IMR-90 (cell line): ENCODE measurements at regions of chr9 and their contacts with region 1.

Region 1: GRCh38 chr9:70413798-70414775 is at the start of gene KLF9:
- DNase-seq: peak; percentile 97
- ATAC-seq: peak; percentile 83
- H3K4me3 ChIP-seq: peak within 1 kb of the TSS; percentile 85
- H3K27ac ChIP-seq: peak within 1 kb of the TSS; percentile 92
- H3K4me1 ChIP-seq: peaks cover 7% of the 10 kb centered on the region
- H3K27me3 ChIP-seq: no peaks in the 10 kb centered on the region
- CTCF ChIP-seq: 0 out of 2 replicates have a peak, but pooled peaks have one; percentile 7
- POLR2A ChIP-seq: peak; percentile 97
- RAD21 ChIP-seq: peak; percentile 7
- total RNA-seq, gene KLF9: 7.5 and 11.4 TPM in 2 replicates

Region 2: GRCh38 chr9:70258692-70259511 is 155.2 kb before region 1 on chr9 and contains the start of gene SMC5:
- CTCF ChIA-PET with region 1: no interaction called
- POLR2A ChIA-PET with region 1: interaction called, 3 read pairs
- dilution Hi-C with region 1: no loop called
- in situ Hi-C with region 1: no loop called
- intact Hi-C with region 1: loop called (anchors 2 kb)
- DNase-seq: peak; percentile 92
- ATAC-seq: peak; percentile 84
- H3K4me3 ChIP-seq: peak within 1 kb of the TSS; percentile 75
- H3K27ac ChIP-seq: peak within 1 kb of the TSS; percentile 97
- H3K4me1 ChIP-seq: peaks cover 26% of the 10 kb centered on the region
- H3K27me3 ChIP-seq: no peaks in the 10 kb centered on the region
- CTCF ChIP-seq: no peak
- POLR2A ChIP-seq: peak; percentile 96
- RAD21 ChIP-seq: no peak
- total RNA-seq, gene SMC5: 12.0 and 25.8 TPM in 2 replicates

Region 3: DNA sequence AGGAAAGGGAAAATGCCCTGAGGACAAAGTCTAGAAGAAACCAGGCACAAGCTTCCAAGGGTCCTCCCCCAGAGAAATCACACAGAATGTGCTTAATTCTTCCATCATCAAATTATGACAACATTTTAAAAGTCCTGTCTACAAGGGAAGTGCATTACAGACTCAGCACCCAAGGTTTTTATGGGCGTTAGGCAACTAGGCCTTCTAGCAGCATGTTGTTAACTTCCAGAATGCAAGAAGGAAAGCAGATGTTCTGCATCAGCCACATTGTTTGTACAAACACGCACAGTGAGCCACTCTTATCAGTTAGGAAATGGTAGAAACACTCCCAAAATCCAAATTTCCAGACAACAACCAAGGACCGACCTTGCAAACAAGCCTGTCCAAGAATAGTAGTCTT is 128.8 kb before region 1 on chr9:
- CTCF ChIA-PET with region 1: no interaction called
- POLR2A ChIA-PET with region 1: interaction called, 11 read pairs
- dilution Hi-C with region 1: no loop called
- in situ Hi-C with region 1: no loop called
- intact Hi-C with region 1: no loop called
- DNase-seq: peak; percentile 73
- ATAC-seq: peak; percentile 74
- H3K4me3 ChIP-seq: no peak overlapping the region
- H3K27ac ChIP-seq: peak overlapping the region; percentile 81; the same call in 1 of the 2 replicates
- H3K4me1 ChIP-seq: peaks cover 15% of the 10 kb centered on the region
- H3K27me3 ChIP-seq: no peaks in the 10 kb centered on the region
- CTCF ChIP-seq: no peak
- POLR2A ChIP-seq: no peak
- RAD21 ChIP-seq: no peak

Region 4: DNA sequence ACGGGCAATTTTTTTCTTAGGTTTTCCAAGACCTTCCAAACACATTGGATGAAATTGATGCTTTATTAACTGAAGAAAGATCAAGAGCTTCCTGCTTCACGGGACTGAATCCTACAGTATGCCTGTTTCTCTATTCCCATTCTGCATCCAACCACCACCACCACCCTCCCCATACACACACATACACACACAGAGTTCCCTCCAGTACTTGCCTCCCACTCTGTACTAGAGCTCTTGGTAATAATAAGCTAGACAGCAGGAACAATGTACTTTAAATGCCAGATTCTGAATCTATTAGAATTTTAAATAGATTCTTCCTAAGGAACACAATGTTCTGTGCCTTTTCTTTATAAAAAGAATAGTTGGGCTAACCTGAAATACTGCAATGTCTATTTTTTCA is 67.0 kb before region 1 on chr9:
- CTCF ChIA-PET with region 1: no interaction called
- POLR2A ChIA-PET with region 1: no interaction called
- dilution Hi-C with region 1: no loop called
- in situ Hi-C with region 1: loop called (anchors 5 kb)
- intact Hi-C with region 1: loop called (anchors 5 kb)
- DNase-seq: no peak
- ATAC-seq: no peak
- H3K4me3 ChIP-seq: no peak overlapping the region
- H3K27ac ChIP-seq: no peak overlapping the region
- H3K4me1 ChIP-seq: no peaks in the 10 kb centered on the region
- H3K27me3 ChIP-seq: no peaks in the 10 kb centered on the region
- CTCF ChIP-seq: no peak
- POLR2A ChIP-seq: no peak
- RAD21 ChIP-seq: no peak

Region 5: DNA sequence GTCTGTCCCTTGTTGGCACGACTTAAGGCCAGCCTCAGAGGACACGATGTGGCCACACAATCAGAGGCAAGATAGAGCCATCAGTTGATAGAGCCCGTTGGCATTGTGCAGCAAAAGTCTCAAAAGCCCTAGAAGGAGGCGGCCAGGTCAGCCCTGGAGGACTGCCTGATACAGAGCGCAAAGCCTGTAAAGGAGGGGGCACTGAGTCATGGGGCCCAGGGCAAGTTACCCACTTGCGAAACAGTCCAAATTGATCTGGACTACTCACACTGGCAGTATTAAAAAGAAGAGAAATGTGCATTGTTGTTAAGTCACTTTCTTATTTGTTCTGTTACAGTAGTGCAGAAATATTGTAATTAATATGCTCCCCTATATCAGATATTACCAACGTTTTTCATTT is 51.1 kb before region 1 on chr9:
- CTCF ChIA-PET with region 1: no interaction called
- POLR2A ChIA-PET with region 1: interaction called, 19 read pairs
- dilution Hi-C with region 1: no loop called
- in situ Hi-C with region 1: no loop called
- intact Hi-C with region 1: no loop called
- DNase-seq: peak; percentile 32
- ATAC-seq: no peak; the same call in 1 of the 2 replicates
- H3K4me3 ChIP-seq: no peak overlapping the region
- H3K27ac ChIP-seq: no peak overlapping the region
- H3K4me1 ChIP-seq: no peaks in the 10 kb centered on the region
- H3K27me3 ChIP-seq: no peaks in the 10 kb centered on the region
- CTCF ChIP-seq: no peak
- POLR2A ChIP-seq: no peak
- RAD21 ChIP-seq: no peak

Region 6: DNA sequence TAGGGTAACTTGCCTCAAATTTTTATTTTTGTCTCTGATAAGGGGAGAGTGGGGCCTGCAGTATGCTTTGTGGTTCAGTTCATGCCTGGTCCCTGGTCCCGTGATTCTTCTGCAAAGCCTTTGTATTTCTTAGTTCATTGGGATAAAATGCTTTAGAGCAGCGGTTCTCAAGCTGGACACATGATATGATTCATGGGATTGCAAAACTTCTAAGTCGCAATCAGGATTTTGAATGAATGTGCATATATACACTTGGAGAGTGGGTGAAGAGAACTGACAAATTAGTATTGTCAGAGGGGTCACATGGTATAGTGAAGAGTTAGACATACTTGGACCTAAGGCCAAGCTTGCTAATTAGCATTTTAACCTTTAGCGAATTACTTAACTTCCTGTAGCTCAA is 265.8 kb after region 1 on chr9:
- CTCF ChIA-PET with region 1: no interaction called
- POLR2A ChIA-PET with region 1: no interaction called
- dilution Hi-C with region 1: no loop called
- in situ Hi-C with region 1: no loop called
- intact Hi-C with region 1: no loop called
- DNase-seq: peak; percentile 1
- ATAC-seq: no peak
- H3K4me3 ChIP-seq: no peak overlapping the region
- H3K27ac ChIP-seq: no peak overlapping the region
- H3K4me1 ChIP-seq: no peaks in the 10 kb centered on the region
- H3K27me3 ChIP-seq: no peaks in the 10 kb centered on the region
- CTCF ChIP-seq: no peak
- POLR2A ChIP-seq: no peak
- RAD21 ChIP-seq: no peak